Ovary (tissue), 10 donors: ENCODE measurements at regions of chr10 and their contacts with region 1.

Region 1: GRCh38 chr10:23525406-23525805 is 86.5 kb downstream of the OTUD1 start:
- DNase-seq: no peak
- H3K4me3 ChIP-seq: no peak overlapping the region
- H3K27ac ChIP-seq: no peak overlapping the region
- H3K4me1 ChIP-seq: no peaks in the 10 kb centered on the region
- H3K27me3 ChIP-seq: no peaks in the 10 kb centered on the region
- CTCF ChIP-seq: no peak
- EP300 ChIP-seq: no peak
- POLR2A ChIP-seq: no peak

Region 2: DNA sequence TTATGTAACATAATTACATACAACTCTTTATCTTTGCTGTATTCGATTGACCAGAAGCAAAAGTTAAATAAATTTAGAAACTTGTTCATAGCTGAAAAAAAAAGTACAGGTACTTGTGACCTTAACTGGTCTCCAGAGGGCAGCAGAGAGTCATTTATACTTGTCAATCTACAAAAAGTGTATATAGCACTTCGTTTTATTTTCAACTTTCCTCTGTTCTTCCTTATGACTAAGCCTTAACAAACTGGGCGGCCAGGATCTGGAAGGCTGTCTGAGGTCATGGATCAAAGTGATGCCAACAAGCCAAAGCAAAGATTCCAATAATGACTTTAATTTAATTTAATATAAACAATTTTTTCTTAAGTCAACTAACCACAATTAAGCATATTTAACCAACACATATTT is 210.6 kb before region 1 on chr10:
- intact Hi-C with region 1: loop called (anchors 5 to 10 kb)
- DNase-seq: peak in 3 of 5 donors; percentile 16 to 50 (median 37)
- H3K4me3 ChIP-seq: no peak overlapping the region
- H3K27ac ChIP-seq: no peak overlapping the region
- H3K4me1 ChIP-seq: peaks cover 2% of the 10 kb centered on the region
- H3K27me3 ChIP-seq: no peaks in the 10 kb centered on the region
- CTCF ChIP-seq: peak; percentile 47 to 62 (median 47)
- EP300 ChIP-seq: no peak
- POLR2A ChIP-seq: no peak

Region 3: DNA sequence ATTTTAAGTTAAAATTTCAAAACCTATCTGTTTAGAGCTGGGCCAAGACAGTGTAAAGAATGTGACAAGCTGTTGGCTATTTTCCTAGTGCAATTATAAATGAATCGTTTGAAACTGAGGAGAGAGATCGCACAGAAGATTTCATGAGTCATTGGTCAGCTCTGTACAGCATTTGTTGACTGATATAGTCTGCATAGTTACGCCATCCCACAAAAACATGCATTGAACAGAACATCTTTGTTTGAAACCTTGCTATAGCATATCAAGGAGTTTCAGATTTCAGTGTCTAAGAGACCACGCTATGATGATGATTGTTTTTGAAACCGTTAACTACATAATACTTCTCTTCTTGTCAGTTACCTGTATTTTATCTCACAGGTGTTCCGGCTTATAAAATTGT is 179.5 kb before region 1 on chr10:
- intact Hi-C with region 1: no loop called
- DNase-seq: no peak
- H3K4me3 ChIP-seq: no peak overlapping the region
- H3K27ac ChIP-seq: no peak overlapping the region
- H3K4me1 ChIP-seq: peaks cover 3% of the 10 kb centered on the region
- H3K27me3 ChIP-seq: no peaks in the 10 kb centered on the region
- CTCF ChIP-seq: no peak
- EP300 ChIP-seq: no peak
- POLR2A ChIP-seq: no peak

Region 4: GRCh38 chr10:23438550-23439441 is 86.6 kb before region 1 on chr10 and contains the start of gene OTUD1:
- intact Hi-C with region 1: no loop called
- DNase-seq: peak; percentile 95 to 98 (median 97)
- H3K4me3 ChIP-seq: peak within 1 kb of the TSS; percentile 60
- H3K27ac ChIP-seq: peak within 1 kb of the TSS; percentile 89 to 94
- H3K4me1 ChIP-seq: peaks cover 5% of the 10 kb centered on the region
- H3K27me3 ChIP-seq: no peaks in the 10 kb centered on the region
- CTCF ChIP-seq: peak; percentile 8 to 17 (median 11)
- EP300 ChIP-seq: no peak
- POLR2A ChIP-seq: peak; percentile 61
- total RNA-seq, gene OTUD1: 13.3 to 23.9 (median 19.9) TPM

Region 5: GRCh38 chr10:23478570-23478969 is 46.8 kb before region 1 on chr10:
- intact Hi-C with region 1: loop called in 1 of 4 experiments (anchors 2 kb)
- DNase-seq: no peak
- H3K4me3 ChIP-seq: no peak overlapping the region
- H3K27ac ChIP-seq: no peak overlapping the region
- H3K4me1 ChIP-seq: no peaks in the 10 kb centered on the region
- H3K27me3 ChIP-seq: no peaks in the 10 kb centered on the region
- CTCF ChIP-seq: no peak
- EP300 ChIP-seq: no peak
- POLR2A ChIP-seq: no peak